ENCODE measurements at regions of chr5 and their contacts with region 1.

Region 1: GRCh38 chr5:64285188-64286130 is 119.8 kb downstream of the RNF180 start:
- DNase-seq: no peak
- H3K4me3 Mint-ChIP-seq: no peak overlapping the region
- H3K27ac Mint-ChIP-seq: no peak overlapping the region
- H3K4me1 Mint-ChIP-seq: no peaks in the 10 kb centered on the region
- H3K27me3 Mint-ChIP-seq: no peaks in the 10 kb centered on the region
- CTCF ChIP-seq: no peak

Region 2: DNA sequence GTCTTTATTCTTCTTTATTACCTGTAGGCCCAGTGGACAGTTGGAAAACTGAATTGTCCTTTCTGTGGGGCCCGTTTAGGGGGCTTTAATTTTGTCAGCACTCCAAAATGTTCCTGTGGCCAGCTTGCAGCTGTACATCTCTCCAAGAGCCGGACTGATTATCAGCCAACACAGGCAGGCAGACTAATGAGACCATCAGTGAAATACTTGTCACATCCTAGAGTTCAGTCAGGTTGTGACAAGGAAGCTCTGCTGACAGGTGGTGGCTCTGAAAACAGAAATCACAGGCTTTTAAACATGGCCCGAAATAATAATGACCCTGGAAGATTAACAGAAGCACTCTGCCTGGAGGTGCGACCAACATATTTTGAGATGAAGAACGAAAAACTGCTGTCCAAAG is 71.9 kb before region 1 on chr5:
- CTCF ChIA-PET with region 1: no interaction called
- intact Hi-C with region 1: no loop called
- DNase-seq: no peak
- H3K4me3 Mint-ChIP-seq: no peak overlapping the region
- H3K27ac Mint-ChIP-seq: no peak overlapping the region
- H3K4me1 Mint-ChIP-seq: peaks cover 9% of the 10 kb centered on the region
- H3K27me3 Mint-ChIP-seq: no peaks in the 10 kb centered on the region
- CTCF ChIP-seq: no peak

Region 3: GRCh38 chr5:64273276-64273675 is 12.2 kb before region 1 on chr5:
- CTCF ChIA-PET with region 1: interaction called, 11 read pairs
- intact Hi-C with region 1: no loop called
- DNase-seq: no peak
- H3K4me3 Mint-ChIP-seq: no peak overlapping the region
- H3K27ac Mint-ChIP-seq: no peak overlapping the region
- H3K4me1 Mint-ChIP-seq: no peaks in the 10 kb centered on the region
- H3K27me3 Mint-ChIP-seq: no peaks in the 10 kb centered on the region
- CTCF ChIP-seq: no peak

Measured in Calu3 (cell line).